Motor neuron (in vitro differentiated cells): ENCODE measurements at regions of chr17 and their contacts with region 1.

Region 1: DNA sequence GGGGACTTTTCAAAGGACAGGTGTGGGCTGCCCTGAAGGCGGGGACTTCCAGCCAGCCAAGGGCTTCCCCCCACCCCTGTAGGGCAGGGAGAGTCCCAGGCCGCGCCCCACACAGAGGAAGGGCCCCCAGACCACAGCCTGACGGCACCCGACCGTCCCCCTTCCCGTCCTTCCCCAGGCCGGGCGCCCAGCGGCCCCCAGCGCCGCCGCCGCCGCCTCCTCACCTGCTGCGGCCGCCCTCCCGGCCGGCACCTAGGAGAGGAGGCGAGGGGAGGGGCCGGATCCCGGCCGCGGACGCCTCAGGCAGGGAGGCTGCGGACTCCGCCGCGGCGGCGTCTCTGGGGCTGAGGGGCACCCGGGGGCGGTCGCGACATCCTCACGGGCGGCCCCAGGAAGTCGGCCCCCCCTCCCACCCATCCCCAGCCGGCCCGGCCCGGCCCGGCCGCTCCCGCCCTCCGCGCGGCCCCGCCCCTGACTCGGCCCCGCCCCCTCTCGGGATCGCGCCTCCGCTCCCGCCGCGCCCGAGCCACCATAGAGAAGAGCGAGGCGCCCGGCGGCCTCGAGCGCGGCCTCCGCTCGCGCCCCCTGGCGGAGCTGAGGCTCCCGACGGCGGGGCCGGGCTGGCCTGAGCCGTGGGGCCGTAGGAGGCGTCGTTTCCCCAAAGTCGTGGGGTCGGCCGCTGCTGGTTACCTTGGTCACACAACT is 25.5 kb upstream of the RFFL start:
- ATAC-seq: peak; percentile 72 to 90 (median 84)
- H3K4me3 ChIP-seq: peak overlapping the region; percentile 57 to 81 (median 65)
- H3K27ac ChIP-seq: peak overlapping the region; percentile 6 to 53
- H3K4me1 ChIP-seq: peaks cover 6 to 11% of the 10 kb centered on the region in 2 donors

Region 2: DNA sequence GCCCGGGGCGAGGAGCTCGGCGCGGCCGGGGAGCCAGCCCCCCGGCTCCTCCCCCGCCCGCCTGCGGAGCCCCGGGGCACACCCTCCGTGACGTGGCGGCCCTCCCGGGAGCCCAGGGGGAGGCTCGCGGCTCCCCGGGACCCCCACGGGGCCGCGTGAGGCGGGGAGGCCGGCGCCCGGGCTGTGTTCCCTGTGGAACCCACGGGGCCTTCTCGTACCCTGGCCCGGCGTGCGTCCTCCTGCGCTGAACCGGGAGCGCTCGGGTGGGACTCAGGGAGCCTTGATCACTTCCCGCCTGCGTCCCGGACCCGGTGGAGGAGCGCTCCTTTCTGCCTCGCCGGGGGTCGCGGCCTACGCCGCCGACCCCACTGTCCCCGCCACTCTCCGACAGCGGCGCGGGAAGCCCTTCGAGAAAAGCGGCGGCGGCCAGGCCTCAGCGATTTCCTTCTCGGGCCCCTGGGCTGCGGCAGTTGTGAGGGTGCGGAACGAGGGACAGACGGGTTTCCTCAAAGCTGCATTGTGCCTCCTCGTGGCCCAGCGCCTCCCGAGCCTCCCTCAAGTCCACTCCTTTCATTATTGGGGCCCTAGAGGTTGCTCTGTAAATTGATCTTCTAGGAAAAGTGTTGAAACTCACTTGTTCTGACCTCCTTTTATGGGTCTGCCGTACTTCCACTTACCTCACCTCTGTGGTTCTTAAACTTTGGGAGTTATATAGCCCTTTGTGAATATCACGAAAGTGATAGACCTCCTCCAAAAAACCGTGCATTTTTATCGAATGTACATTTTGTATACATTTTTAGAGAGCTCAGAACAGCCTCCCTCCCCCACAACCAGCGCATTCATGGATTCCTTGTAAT is 108.1 kb before region 1 on chr17:
- in situ Hi-C with region 1: loop called in 1 of 9 experiments (anchors 25 kb)
- ATAC-seq: peak; percentile 76 to 89 (median 84)
- H3K4me3 ChIP-seq: peak overlapping the region; percentile 77 to 96 (median 85)
- H3K27ac ChIP-seq: peak overlapping the region; percentile 97 to 98
- H3K4me1 ChIP-seq: peaks cover 9 to 11% of the 10 kb centered on the region in 2 donors